ENCODE measurements at regions of chr10 and their contacts with region 1.

Region 1: DNA sequence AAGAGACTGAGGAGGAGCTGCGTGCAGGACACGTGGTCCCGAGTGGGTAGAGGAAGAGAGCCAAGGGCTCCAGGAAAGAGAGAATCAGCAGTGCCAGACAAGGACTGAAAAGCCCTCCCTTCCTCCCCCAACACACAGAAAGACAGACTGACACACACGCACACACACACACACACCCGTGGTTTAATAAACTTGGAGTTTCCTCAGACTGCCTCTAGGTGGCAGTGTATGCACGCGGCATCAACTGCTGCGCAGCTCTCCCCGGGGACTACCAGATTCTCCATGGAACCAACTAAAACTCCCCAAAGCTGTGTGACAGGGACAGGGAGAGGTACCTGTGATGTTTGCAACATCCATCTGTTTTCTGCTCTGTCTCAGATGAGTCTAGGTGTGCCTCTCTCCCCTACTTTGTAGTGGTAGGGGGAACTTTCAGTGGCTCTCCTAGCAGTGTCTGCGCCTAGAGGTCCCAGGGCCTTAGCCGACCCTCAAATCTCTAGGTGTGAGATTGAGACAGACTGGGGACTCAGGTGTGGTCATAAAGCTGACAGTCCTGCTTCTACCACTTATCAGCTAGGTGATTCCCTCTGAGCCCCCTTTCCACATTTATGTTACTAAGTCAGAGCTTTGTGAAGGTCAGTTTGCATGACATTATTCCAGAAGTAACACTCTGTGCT is 9.3 kb upstream of the TSPAN14 start:
- DNase-seq: peak; percentile 83 to 89
- ATAC-seq: peak; percentile 88 to 92
- H3K4me3 ChIP-seq: no peak overlapping the region
- H3K27ac ChIP-seq: peak overlapping the region; percentile 64 to 80
- H3K4me1 ChIP-seq: peaks cover 26% of the 10 kb centered on the region
- CTCF ChIP-seq: peak; percentile 98
- EP300 ChIP-seq: no peak
- POLR2A ChIP-seq: no peak
- RAD21 ChIP-seq: peak; percentile 99

Region 2: GRCh38 chr10:80392276-80392675 is 52.5 kb before region 1 on chr10:
- CTCF ChIA-PET with region 1: interaction called, 184 read pairs
- POLR2A ChIA-PET with region 1: interaction called, 3 read pairs
- DNase-seq: no peak
- ATAC-seq: no peak
- H3K4me3 ChIP-seq: no peak overlapping the region
- H3K27ac ChIP-seq: no peak overlapping the region
- H3K4me1 ChIP-seq: no peaks in the 10 kb centered on the region
- CTCF ChIP-seq: no peak
- EP300 ChIP-seq: no peak
- POLR2A ChIP-seq: no peak
- RAD21 ChIP-seq: no peak

Region 3: GRCh38 chr10:80459047-80459931 is 14.5 kb after region 1 on chr10:
- CTCF ChIA-PET with region 1: interaction called, 53 read pairs
- POLR2A ChIA-PET with region 1: no interaction called
- DNase-seq: no peak
- ATAC-seq: peak in 1 of 2 experiments; percentile 25; a peak in 3 of 6 replicates
- H3K4me3 ChIP-seq: peak overlapping the region; percentile 12; the same call in 1 of the 3 replicates
- H3K27ac ChIP-seq: peak overlapping the region; percentile 59 to 100
- H3K4me1 ChIP-seq: peaks cover 87% of the 10 kb centered on the region
- CTCF ChIP-seq: no peak
- EP300 ChIP-seq: no peak
- POLR2A ChIP-seq: no peak
- RAD21 ChIP-seq: no peak

Region 4: GRCh38 chr10:80493522-80494051 is 48.8 kb after region 1 on chr10:
- CTCF ChIA-PET with region 1: interaction called, 928 read pairs
- POLR2A ChIA-PET with region 1: no interaction called
- DNase-seq: peak in 1 of 2 experiments; percentile 51
- ATAC-seq: peak; percentile 17 to 36; a peak in 5 of 6 replicates
- H3K4me3 ChIP-seq: no peak overlapping the region
- H3K27ac ChIP-seq: peak overlapping the region; percentile 90 to 100
- H3K4me1 ChIP-seq: peaks cover 99% of the 10 kb centered on the region
- CTCF ChIP-seq: no peak
- EP300 ChIP-seq: no peak
- POLR2A ChIP-seq: no peak
- RAD21 ChIP-seq: no peak

Region 5: GRCh38 chr10:80535671-80536365 is 91.0 kb after region 1 on chr10:
- CTCF ChIA-PET with region 1: interaction called, 81 read pairs
- POLR2A ChIA-PET with region 1: no interaction called
- DNase-seq: peak; percentile 82 to 89
- ATAC-seq: peak; percentile 92 to 96
- H3K4me3 ChIP-seq: peak overlapping the region; percentile 56
- H3K27ac ChIP-seq: peak overlapping the region; percentile 79 to 97
- H3K4me1 ChIP-seq: peaks cover 27% of the 10 kb centered on the region
- CTCF ChIP-seq: peak; percentile 76
- EP300 ChIP-seq: no peak
- POLR2A ChIP-seq: peak; percentile 81
- RAD21 ChIP-seq: peak; percentile 56 to 77

Region 6: GRCh38 chr10:80670763-80671162 is 226.0 kb after region 1 on chr10:
- CTCF ChIA-PET with region 1: interaction called, 16 read pairs
- POLR2A ChIA-PET with region 1: no interaction called
- DNase-seq: no peak
- ATAC-seq: no peak
- H3K4me3 ChIP-seq: no peak overlapping the region
- H3K27ac ChIP-seq: no peak overlapping the region
- H3K4me1 ChIP-seq: no peaks in the 10 kb centered on the region
- CTCF ChIP-seq: no peak
- EP300 ChIP-seq: no peak
- POLR2A ChIP-seq: no peak
- RAD21 ChIP-seq: no peak